ENCODE measurements at regions of chr16 and their contacts with region 1.

Region 1: DNA sequence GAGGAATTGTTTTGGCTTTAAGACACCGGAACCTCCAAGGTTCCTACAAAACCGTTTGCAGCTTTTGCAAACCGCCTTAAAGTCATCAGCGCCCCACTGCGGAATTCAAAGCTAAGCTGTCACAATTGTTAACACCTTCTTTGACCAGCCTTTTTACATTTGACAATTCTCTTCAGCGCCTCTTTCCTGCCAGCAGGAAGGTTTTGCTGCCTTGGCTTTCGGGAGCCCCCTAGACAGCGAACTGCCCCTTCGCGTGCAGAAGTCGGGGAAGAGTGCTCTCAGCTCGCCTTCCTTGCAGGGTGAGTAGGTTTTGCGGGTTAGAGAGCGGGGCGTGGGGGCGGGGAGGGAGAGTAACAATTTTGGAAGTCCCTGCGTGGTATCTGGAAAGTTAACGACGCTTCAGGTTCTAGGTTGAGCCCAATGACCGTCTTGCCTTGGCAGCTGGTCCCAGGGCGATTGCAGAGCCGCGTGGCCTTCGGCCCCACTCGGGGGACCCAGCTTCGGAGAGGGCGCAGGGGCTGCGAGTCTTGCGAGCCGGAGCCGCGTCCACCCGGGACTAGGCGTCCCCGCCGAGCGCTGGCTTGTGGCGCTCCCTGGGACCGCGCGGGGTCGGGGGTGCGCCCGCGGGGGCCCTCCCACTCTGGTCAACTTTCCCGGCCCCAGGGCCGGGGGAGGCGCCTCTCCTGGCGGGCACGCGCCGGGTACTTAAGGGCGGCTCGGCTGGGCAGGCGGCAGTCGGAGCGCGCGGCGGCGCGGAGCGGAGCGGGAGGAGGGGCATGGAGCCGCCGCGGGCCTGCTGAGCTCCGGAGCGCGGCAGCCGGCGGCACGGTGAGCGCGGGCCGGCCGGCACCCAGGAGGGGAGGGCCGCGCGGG is at the start of gene HAS3:
- DNase-seq: peak; percentile 75
- H3K4me3 ChIP-seq: peak within 1 kb of the TSS; percentile 75 to 88 (median 80)
- H3K27ac ChIP-seq: no peak within 1 kb of the TSS
- H3K4me1 ChIP-seq: peaks cover 48% of the 10 kb centered on the region
- H3K27me3 ChIP-seq: no peaks in the 10 kb centered on the region
- CTCF ChIP-seq: peak; percentile 39 to 75
- total RNA-seq, gene HAS3: 38.2 to 133 TPM

Region 2: GRCh38 chr16:68848786-68849185 is 256.9 kb before region 1 on chr16:
- CTCF ChIA-PET with region 1: no interaction called
- dilution Hi-C with region 1: no loop called
- in situ Hi-C with region 1: no loop called
- intact Hi-C with region 1: loop called (anchors 5 kb)
- DNase-seq: no peak
- H3K4me3 ChIP-seq: no peak overlapping the region
- H3K27ac ChIP-seq: no peak overlapping the region
- H3K4me1 ChIP-seq: no peaks in the 10 kb centered on the region
- H3K27me3 ChIP-seq: no peaks in the 10 kb centered on the region
- CTCF ChIP-seq: no peak

Region 3: GRCh38 chr16:68915589-68915988 is 190.1 kb before region 1 on chr16:
- CTCF ChIA-PET with region 1: no interaction called
- dilution Hi-C with region 1: no loop called
- in situ Hi-C with region 1: no loop called
- intact Hi-C with region 1: loop called (anchors 1 kb)
- DNase-seq: peak; percentile 76
- H3K4me3 ChIP-seq: no peak overlapping the region
- H3K27ac ChIP-seq: peak overlapping the region; percentile 55
- H3K4me1 ChIP-seq: peaks cover 23% of the 10 kb centered on the region
- H3K27me3 ChIP-seq: no peaks in the 10 kb centered on the region
- CTCF ChIP-seq: peak in 1 of 2 donors; percentile 26

Region 4: DNA sequence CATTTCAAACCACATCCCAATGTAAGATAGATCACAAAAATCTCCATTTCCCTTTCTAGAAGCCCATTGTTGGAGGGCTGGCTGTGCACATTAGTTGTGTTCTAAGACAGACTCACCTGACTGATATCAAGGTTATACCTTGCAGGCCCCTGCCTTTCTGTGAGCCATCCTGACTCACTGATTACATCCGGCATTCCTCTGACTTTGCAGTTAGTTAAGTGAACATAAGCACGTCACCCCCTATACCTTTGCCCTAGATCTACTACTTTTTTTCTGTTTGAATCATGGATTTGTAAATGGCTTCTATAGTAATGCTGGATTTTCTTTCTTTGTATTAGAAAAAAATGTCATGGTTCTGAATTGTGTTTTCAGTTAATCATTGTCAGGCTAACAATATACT is 184.1 kb before region 1 on chr16:
- CTCF ChIA-PET with region 1: no interaction called
- dilution Hi-C with region 1: no loop called
- in situ Hi-C with region 1: no loop called
- intact Hi-C with region 1: loop called (anchors 1 kb)
- DNase-seq: peak; percentile 96
- H3K4me3 ChIP-seq: no peak overlapping the region
- H3K27ac ChIP-seq: peak overlapping the region; percentile 89
- H3K4me1 ChIP-seq: peaks cover 43% of the 10 kb centered on the region
- H3K27me3 ChIP-seq: no peaks in the 10 kb centered on the region
- CTCF ChIP-seq: no peak

Region 5: GRCh38 chr16:69073161-69073669 is 32.5 kb before region 1 on chr16:
- CTCF ChIA-PET with region 1: interaction called, 11 read pairs
- dilution Hi-C with region 1: loop called (anchors 5 kb)
- in situ Hi-C with region 1: no loop called
- intact Hi-C with region 1: loop called (anchors 1 kb)
- DNase-seq: peak; percentile 98
- H3K4me3 ChIP-seq: no peak overlapping the region
- H3K27ac ChIP-seq: peak overlapping the region; percentile 79
- H3K4me1 ChIP-seq: peaks cover 35% of the 10 kb centered on the region
- H3K27me3 ChIP-seq: no peaks in the 10 kb centered on the region
- CTCF ChIP-seq: peak in 1 of 2 donors; percentile 7

Measured in mammary epithelial cell (primary cell).